Body of pancreas (tissue), 4 donors: ENCODE measurements at regions of chr18 and their contacts with region 1.

Region 1: GRCh38 chr18:22609642-22610041 is 191.9 kb upstream of the CTAGE1 start:
- DNase-seq: peak; percentile 45 to 56 (median 52)
- ATAC-seq: peak; percentile 26
- H3K4me3 ChIP-seq: no peak overlapping the region
- H3K27ac ChIP-seq: peak overlapping the region in 2 of 4 donors; percentile 2 to 65
- H3K4me1 ChIP-seq: peaks cover 8% of the 10 kb centered on the region
- H3K27me3 ChIP-seq: no peaks in the 10 kb centered on the region
- CTCF ChIP-seq: no peak
- POLR2A ChIP-seq: no peak

Region 2: DNA sequence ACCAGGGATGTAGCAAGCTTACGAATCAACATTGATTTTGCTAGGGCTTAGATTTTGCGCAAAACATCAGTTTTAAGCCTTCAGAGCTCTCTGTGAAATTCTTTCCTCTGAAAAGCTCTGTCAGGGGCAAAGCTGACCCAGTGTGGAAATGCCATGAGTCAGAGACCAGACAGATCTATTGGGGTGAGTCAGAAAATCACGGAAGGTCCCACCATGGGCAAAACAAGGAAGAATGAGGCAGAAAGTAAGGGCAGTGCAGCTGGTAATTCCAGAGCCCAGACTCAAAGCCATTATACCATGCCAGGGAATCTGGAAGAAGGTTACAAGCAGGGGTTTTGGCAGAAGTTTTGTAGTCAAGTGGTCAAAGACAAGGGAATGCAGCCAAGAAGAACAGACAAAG is 64.6 kb after region 1 on chr18:
- intact Hi-C with region 1: loop called (anchors 10 kb)
- DNase-seq: no peak
- ATAC-seq: no peak
- H3K4me3 ChIP-seq: no peak overlapping the region
- H3K27ac ChIP-seq: no peak overlapping the region
- H3K4me1 ChIP-seq: peaks cover 15% of the 10 kb centered on the region
- H3K27me3 ChIP-seq: no peaks in the 10 kb centered on the region
- CTCF ChIP-seq: no peak
- POLR2A ChIP-seq: no peak